Left cardiac atrium (tissue), 4 donors: ENCODE measurements at regions of chr22 and their contacts with region 1.

Region 1: GRCh38 chr22:22959147-22959827 is 71.7 kb downstream of the IGLL5 start:
- DNase-seq: peak; percentile 76
- ATAC-seq: peak; percentile 60 to 75

Region 2: DNA sequence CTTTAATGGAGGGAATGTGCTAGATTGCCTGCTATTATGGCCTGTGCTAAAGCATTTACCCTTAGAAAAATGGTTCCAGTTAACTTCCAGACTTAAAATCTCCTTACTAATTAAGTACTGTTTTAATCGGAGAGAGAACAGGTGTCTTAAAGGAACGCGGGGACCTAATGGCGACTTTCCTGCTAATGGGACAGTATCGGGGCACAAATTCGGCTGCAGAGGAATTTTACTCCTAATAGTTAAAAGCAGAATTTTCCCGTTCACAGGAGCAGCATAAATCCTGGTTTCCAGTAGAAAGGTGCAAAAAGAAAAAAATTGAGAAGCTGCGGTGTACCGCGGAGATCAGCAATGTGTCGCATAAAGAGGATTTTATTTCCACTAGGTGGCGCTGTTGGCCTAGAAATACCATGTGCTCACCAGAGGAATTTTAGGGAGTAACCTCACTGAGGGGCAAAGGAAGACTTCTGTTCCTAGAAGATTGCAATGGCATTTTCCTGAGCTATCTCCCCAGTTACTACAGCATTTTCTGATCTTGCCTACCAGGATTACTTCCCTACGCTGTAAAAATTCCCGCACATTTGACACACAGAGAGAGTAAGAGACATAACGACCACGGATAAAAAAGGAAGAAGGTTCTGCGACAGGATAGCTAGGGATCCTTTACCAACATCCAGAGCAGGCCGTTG is 495.3 kb before region 1 on chr22:
- intact Hi-C with region 1: loop called (anchors 2 to 5 kb)
- DNase-seq: peak; percentile 31
- ATAC-seq: peak; percentile 47 to 71

Region 3: GRCh38 chr22:22587577-22588188 is 371.6 kb before region 1 on chr22:
- intact Hi-C with region 1: loop called in 1 of 2 experiments (anchors 5 kb)
- DNase-seq: no peak
- ATAC-seq: no peak

Region 4: GRCh38 chr22:22848364-22848866 is 110.9 kb before region 1 on chr22:
- intact Hi-C with region 1: loop called in 1 of 2 experiments (anchors 2 kb)
- DNase-seq: peak; percentile 64
- ATAC-seq: peak; percentile 70 to 83

Region 5: GRCh38 chr22:22877523-22878210 is 81.6 kb before region 1 on chr22:
- intact Hi-C with region 1: no loop called
- DNase-seq: peak; percentile 51
- ATAC-seq: peak in 1 of 2 donors; percentile 24

Region 6: DNA sequence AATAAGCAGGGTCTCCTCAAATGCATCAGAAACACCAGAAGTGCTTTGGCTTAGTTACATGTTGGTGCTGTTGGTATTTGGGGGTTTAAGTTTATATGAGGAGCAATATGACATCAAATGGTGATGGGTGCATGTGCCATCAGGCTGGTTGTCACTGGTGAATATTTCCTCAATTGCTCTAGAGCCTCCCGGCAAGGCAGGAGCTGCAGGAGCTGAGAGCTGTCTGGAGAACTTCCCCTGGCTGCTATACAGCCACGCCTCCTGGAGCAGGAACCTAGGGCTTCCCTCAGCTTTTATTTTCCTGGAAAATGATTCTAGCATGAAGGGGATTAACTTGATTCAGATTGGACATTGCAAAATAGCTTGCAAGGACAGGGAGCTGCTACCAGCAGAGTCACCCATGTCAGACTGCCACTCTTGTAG is 55.9 kb before region 1 on chr22:
- intact Hi-C with region 1: no loop called
- DNase-seq: no peak
- ATAC-seq: no peak

Region 7: DNA sequence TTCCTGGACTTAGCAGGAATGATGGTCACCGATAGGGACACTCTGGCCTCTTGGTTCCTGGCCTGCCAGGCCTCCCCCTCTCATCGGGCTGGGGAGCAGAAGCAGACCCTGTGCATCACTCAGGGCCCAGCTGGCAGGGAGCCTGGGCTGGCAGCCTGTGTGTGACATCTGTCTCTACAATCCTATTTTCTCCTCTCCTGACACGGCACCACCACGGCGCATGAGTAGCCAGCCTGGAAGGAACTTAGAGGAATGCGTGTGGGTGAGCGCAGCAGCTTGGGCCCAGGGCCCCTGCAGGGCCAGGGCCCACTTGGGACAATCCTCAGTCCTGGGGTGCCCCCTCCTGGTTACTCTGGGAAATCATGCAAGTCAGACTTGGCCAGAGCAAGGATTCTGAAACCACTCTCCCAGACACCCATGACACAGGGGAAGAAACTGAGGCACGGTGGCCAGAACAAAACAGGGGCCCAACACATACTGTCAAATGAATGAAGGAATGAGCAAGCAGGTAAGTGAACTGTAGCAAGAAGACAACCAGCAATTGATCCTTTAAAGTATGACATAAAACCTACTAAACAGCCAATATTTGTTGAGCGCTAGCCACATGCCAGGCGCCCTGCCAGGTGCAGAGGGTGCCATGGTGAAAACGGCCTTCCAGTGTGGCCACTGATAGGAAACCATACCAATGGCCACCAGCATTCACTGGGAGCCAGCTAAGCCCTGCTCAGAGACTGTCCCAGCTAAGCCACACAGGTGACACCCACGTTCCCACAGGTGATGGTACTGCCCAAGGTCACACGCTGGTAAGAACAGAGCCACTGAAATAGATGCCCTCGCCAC is 169.2 kb after region 1 on chr22:
- intact Hi-C with region 1: loop called (anchors 1 to 5 kb)
- DNase-seq: peak; percentile 73
- ATAC-seq: peak; percentile 90

Region 8: DNA sequence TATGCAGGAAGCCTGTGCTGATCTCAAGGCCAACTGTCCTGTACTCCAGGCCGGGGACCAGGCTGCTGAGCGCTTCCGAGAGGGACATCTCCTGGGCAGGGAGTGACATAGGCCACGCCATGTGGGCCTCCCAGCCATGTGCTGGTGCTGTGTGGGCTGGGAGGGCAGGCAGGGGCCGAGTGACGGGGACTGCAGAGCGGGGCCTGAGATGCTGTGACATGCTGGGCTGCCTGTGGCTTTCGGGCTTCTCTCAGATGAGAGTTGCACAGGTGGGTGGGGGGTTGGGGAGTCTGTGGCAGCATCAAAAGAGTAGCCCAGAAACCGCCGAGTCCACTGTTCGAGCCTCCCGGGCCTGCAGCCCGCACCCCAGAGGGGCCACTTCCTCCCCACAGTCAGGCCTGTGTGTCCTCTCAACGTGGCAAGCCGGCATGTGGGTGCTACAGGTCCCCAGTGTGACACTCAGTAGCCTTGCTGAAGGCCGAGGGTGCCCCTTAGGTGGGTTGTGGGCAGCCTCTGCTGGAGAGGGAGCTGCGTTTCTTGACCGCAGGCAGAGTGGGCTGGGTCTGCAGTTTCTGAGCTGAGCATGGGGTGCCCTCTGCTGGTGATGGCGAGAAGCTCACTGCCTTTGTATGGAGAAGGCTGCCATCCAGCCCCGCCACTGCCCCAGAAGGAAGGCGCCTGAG is 322.3 kb after region 1 on chr22:
- intact Hi-C with region 1: loop called in 1 of 2 experiments (anchors 10 kb)
- DNase-seq: peak; percentile 87
- ATAC-seq: peak; percentile 77 to 83

Region 9: GRCh38 chr22:23385291-23386244 is 426.3 kb after region 1 on chr22:
- intact Hi-C with region 1: loop called in 1 of 2 experiments (anchors 5 kb)
- DNase-seq: peak; percentile 83
- ATAC-seq: peak; percentile 66 to 79